Endothelial cell of umbilical vein (primary cell): ENCODE measurements at regions of chr15 and their contacts with region 1.

Region 1: GRCh38 chr15:60585743-60586708 is 107.1 kb upstream of the ICE2 start:
- DNase-seq: peak; percentile 80
- H3K4me3 ChIP-seq: no peak overlapping the region
- H3K27ac ChIP-seq: no peak overlapping the region
- H3K4me1 ChIP-seq: peaks cover 25% of the 10 kb centered on the region
- H3K27me3 ChIP-seq: no peaks in the 10 kb centered on the region
- CTCF ChIP-seq: peak; percentile 68 to 75
- POLR2A ChIP-seq: no peak

Region 2: DNA sequence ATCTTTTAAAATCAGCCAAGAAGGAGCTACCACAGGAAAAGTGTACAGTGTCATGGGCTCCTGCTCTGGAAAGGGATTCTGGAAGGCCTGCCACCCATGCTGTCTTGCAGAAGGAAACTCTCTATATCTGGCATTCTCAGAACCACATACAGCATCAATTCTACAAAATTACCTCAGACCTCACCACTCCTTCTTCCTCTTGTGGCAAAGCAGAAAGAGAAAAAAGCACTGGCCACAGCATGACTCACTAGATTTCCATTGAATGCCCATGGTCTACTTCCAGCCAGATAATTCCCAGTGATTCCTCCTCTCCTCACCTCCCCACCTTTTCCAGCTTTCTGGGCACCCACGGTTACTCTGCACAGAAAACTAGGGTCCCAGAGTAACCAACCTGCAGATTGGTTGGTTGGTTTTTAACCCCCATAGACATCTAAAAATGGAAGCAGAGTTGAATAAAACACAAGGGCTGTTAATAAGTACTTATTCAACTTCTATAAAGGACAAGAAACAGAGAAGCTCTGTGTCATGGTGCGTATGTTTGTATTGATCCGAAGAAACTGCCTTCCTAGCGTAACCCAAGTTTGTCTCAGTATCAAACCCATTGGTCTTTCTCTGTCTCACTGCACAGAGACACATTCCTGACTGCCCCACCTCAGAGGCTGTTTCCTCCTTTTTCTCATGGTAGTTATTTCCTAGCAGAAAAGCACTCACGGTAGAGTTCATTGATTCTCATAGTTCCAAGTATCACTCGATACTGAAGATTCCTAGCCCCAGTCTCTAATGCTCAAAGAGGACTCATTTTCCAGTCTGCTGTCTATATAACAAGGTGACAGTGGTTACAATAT is 1311.7 kb before region 1 on chr15:
- CTCF ChIA-PET with region 1: no interaction called
- POLR2A ChIA-PET with region 1: no interaction called
- dilution Hi-C with region 1: no loop called
- intact Hi-C with region 1: no loop called
- DNase-seq: peak; percentile 48
- H3K4me3 ChIP-seq: no peak overlapping the region
- H3K27ac ChIP-seq: no peak overlapping the region
- H3K4me1 ChIP-seq: peaks cover 24% of the 10 kb centered on the region
- H3K27me3 ChIP-seq: no peaks in the 10 kb centered on the region
- CTCF ChIP-seq: no peak
- POLR2A ChIP-seq: no peak

Region 3: GRCh38 chr15:60441331-60441730 is 144.7 kb before region 1 on chr15:
- CTCF ChIA-PET with region 1: no interaction called
- POLR2A ChIA-PET with region 1: no interaction called
- dilution Hi-C with region 1: no loop called
- intact Hi-C with region 1: no loop called
- DNase-seq: no peak
- H3K4me3 ChIP-seq: no peak overlapping the region
- H3K27ac ChIP-seq: no peak overlapping the region
- H3K4me1 ChIP-seq: no peaks in the 10 kb centered on the region
- H3K27me3 ChIP-seq: no peaks in the 10 kb centered on the region
- CTCF ChIP-seq: no peak
- POLR2A ChIP-seq: no peak

Region 4: GRCh38 chr15:60507596-60508424 is 78.2 kb before region 1 on chr15:
- CTCF ChIA-PET with region 1: interaction called, 4 read pairs
- POLR2A ChIA-PET with region 1: no interaction called
- dilution Hi-C with region 1: no loop called
- intact Hi-C with region 1: loop called (anchors 5 kb)
- DNase-seq: peak; percentile 80
- H3K4me3 ChIP-seq: no peak overlapping the region
- H3K27ac ChIP-seq: no peak overlapping the region
- H3K4me1 ChIP-seq: no peaks in the 10 kb centered on the region
- H3K27me3 ChIP-seq: no peaks in the 10 kb centered on the region
- CTCF ChIP-seq: peak; percentile 78 to 87
- POLR2A ChIP-seq: no peak

Region 5: GRCh38 chr15:60859996-60860494 is 274.0 kb after region 1 on chr15:
- CTCF ChIA-PET with region 1: interaction called, 10 read pairs
- POLR2A ChIA-PET with region 1: no interaction called
- dilution Hi-C with region 1: no loop called
- intact Hi-C with region 1: no loop called
- DNase-seq: no peak
- H3K4me3 ChIP-seq: no peak overlapping the region
- H3K27ac ChIP-seq: no peak overlapping the region
- H3K4me1 ChIP-seq: no peaks in the 10 kb centered on the region
- H3K27me3 ChIP-seq: peaks cover 4% of the 10 kb centered on the region in 2 experiments
- CTCF ChIP-seq: no peak
- POLR2A ChIP-seq: no peak

Region 6: GRCh38 chr15:60973637-60974415 is 387.8 kb after region 1 on chr15:
- CTCF ChIA-PET with region 1: interaction called, 5 read pairs
- POLR2A ChIA-PET with region 1: no interaction called
- dilution Hi-C with region 1: no loop called
- intact Hi-C with region 1: loop called (anchors 5 kb)
- DNase-seq: peak; percentile 69
- H3K4me3 ChIP-seq: no peak overlapping the region
- H3K27ac ChIP-seq: peak overlapping the region; percentile 85
- H3K4me1 ChIP-seq: peaks cover 53% of the 10 kb centered on the region
- H3K27me3 ChIP-seq: no peaks in the 10 kb centered on the region
- CTCF ChIP-seq: no peak
- POLR2A ChIP-seq: no peak

Region 7: DNA sequence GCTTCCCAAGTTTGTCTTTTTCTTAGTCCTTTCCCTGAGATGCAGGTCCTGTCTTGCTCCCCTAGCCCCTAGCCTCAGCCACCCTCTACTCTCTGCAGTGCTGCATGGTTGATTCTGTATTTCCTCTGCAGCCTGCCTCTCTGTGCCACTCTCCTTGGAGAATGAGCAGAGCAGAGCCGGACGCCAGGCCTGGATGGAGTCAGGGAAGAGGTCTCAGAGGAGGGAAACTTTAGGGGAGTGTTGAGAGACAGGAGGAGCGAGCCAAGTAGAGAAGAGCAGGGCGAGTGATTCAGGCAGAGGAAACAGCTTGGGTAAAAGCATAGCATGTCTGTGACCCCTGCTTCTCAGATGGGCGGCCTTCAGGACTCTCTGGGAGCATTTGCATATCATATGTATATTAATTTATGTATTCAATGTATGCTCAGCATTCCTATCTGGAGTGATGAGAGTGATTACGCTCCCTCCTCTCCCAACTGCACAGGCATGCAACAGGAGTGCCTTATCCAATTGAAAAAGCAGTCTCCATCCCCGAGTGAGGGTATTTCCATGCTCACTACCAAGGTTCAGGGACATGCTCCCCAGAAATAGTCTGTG is 476.3 kb after region 1 on chr15:
- CTCF ChIA-PET with region 1: no interaction called
- POLR2A ChIA-PET with region 1: no interaction called
- dilution Hi-C with region 1: no loop called
- intact Hi-C with region 1: no loop called
- DNase-seq: no peak
- H3K4me3 ChIP-seq: no peak overlapping the region
- H3K27ac ChIP-seq: no peak overlapping the region
- H3K4me1 ChIP-seq: no peaks in the 10 kb centered on the region
- H3K27me3 ChIP-seq: peaks cover 5 to 8% of the 10 kb centered on the region in 2 experiments
- CTCF ChIP-seq: no peak
- POLR2A ChIP-seq: no peak

Region 8: DNA sequence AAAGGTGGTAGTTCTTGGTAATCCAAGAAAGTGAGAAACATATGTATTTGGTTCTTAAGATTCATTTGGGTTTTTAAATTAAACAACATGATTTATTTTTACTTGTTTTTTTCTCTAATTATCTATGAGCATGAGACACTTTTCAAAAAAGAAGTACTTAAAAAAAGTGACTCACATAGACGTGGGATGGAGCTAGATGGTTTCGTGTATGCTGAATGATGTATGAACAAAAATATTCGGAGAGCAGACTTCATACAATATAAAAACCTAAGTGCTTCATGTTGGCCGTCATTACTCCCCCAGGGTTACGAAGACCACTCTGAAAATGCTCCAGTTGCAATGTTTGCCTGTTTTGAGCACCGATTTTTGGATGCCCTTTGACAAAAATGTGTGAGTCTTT is 552.1 kb after region 1 on chr15:
- CTCF ChIA-PET with region 1: no interaction called
- POLR2A ChIA-PET with region 1: no interaction called
- dilution Hi-C with region 1: no loop called
- intact Hi-C with region 1: no loop called
- DNase-seq: no peak
- H3K4me3 ChIP-seq: no peak overlapping the region
- H3K27ac ChIP-seq: no peak overlapping the region
- H3K4me1 ChIP-seq: no peaks in the 10 kb centered on the region
- H3K27me3 ChIP-seq: peaks cover 0 to 4% of the 10 kb centered on the region in 2 experiments
- CTCF ChIP-seq: no peak
- POLR2A ChIP-seq: no peak

Region 9: GRCh38 chr15:61169904-61170695 is 584.1 kb after region 1 on chr15:
- CTCF ChIA-PET with region 1: interaction called, 3 read pairs
- POLR2A ChIA-PET with region 1: no interaction called
- dilution Hi-C with region 1: no loop called
- intact Hi-C with region 1: loop called (anchors 5 kb)
- DNase-seq: no peak
- H3K4me3 ChIP-seq: no peak overlapping the region
- H3K27ac ChIP-seq: no peak overlapping the region
- H3K4me1 ChIP-seq: peaks cover 13% of the 10 kb centered on the region
- H3K27me3 ChIP-seq: no peaks in the 10 kb centered on the region
- CTCF ChIP-seq: no peak
- POLR2A ChIP-seq: no peak